ENCODE measurements at regions of chr11 and their contacts with region 1.

Region 1: DNA sequence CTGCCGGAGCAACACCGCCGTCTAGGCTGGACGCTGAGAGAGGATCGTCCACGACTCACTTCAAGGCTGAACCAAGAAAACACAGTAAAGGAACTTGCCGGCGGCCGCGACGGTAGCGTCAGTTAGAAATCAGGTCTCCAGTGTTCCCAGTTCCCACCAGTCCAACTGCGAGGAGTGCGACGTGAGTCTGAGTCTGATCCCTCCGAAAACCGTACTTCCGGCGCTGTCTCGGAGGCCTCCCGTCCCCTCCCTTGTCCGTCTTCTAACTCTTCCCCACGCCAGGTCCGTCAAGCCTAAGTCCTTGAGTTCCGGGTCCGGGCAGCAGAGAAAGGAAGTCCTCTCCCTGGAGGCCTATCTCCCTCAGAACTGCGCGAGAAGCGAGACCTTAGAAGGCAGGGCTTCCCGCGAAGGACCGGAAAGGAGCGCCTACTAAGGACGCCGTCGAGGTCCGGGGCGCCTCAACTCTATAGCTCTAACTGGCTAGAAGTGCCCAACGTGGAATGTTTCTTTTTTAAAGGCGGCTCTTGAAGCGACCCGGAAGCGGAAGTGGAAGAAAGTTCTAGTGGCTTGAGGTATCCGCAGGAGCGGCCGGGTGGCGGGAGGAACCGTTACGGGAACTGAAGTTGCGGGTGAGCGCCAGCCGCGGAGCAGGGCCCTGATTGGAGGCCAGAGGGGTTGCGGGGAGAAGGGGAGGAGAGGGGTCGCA is at the starts of genes BANF1 and EIF1AD:
- DNase-seq: peak; percentile 94
- H3K4me3 ChIP-seq: peak within 1 kb of the TSS; percentile 72 to 86
- H3K27ac ChIP-seq: peak within 1 kb of the TSS; percentile 96 to 97
- H3K4me1 ChIP-seq: peaks cover 9% of the 10 kb centered on the region
- H3K27me3 ChIP-seq: no peaks in the 10 kb centered on the region
- CTCF ChIP-seq: peak in 1 of 4 experiments; percentile 16
- POLR2A ChIP-seq: peak; percentile 20
- total RNA-seq, gene BANF1: 59.4 to 78.8 TPM
- total RNA-seq, gene EIF1AD: 33.6 to 37.3 TPM

Region 2: GRCh38 chr11:65859200-65859811 is 142.8 kb before region 1 on chr11:
- intact Hi-C with region 1: loop called (anchors 2 kb)
- DNase-seq: peak; percentile 99
- H3K4me3 ChIP-seq: peak overlapping the region; percentile 99
- H3K27ac ChIP-seq: peak overlapping the region; percentile 94 to 96
- H3K4me1 ChIP-seq: peaks cover 12% of the 10 kb centered on the region
- H3K27me3 ChIP-seq: no peaks in the 10 kb centered on the region
- CTCF ChIP-seq: peak in 1 of 4 experiments; percentile 32
- POLR2A ChIP-seq: peak; percentile 87

Region 3: DNA sequence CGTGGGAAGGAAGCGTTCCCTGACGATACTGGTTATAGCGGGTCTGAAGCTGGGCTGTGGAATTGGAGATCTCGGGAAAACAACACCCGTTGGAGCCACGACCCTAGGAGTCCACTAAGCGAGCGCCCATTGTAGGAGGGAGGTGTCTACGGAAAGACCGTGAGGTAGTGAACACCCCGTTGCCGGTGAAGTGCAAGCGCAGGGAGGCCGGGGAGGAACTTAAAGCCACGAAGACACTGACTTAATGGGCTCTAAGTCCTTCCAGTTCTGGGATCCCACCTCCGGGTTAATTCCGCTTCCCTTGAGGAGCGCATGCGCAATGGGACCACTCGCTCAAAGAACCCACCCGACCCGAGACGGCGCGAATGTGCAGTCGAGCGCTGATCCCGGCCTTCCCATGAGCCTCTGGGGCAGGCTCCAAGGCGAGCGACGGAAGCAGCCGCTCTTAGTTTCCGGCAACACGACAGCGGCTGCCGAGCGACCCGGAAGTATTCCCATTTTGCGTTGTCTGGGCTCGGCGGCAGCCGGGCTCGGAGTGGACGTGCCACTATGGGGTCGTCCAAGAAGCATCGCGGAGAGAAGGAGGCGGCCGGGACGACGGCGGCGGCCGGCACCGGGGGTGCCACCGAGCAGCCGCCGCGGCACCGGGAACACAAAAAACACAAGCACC is 40.7 kb before region 1 on chr11 and contains the start of gene SART1:
- intact Hi-C with region 1: loop called (anchors 2 kb)
- DNase-seq: peak; percentile 96
- H3K4me3 ChIP-seq: peak within 1 kb of the TSS; percentile 89 to 100
- H3K27ac ChIP-seq: peak within 1 kb of the TSS; percentile 74 to 81
- H3K4me1 ChIP-seq: peaks cover 12% of the 10 kb centered on the region
- H3K27me3 ChIP-seq: no peaks in the 10 kb centered on the region
- CTCF ChIP-seq: peak in 2 of 4 experiments; percentile 26 to 31
- POLR2A ChIP-seq: peak; percentile 48
- total RNA-seq, gene SART1: 36.7 to 76.6 TPM

Region 4: DNA sequence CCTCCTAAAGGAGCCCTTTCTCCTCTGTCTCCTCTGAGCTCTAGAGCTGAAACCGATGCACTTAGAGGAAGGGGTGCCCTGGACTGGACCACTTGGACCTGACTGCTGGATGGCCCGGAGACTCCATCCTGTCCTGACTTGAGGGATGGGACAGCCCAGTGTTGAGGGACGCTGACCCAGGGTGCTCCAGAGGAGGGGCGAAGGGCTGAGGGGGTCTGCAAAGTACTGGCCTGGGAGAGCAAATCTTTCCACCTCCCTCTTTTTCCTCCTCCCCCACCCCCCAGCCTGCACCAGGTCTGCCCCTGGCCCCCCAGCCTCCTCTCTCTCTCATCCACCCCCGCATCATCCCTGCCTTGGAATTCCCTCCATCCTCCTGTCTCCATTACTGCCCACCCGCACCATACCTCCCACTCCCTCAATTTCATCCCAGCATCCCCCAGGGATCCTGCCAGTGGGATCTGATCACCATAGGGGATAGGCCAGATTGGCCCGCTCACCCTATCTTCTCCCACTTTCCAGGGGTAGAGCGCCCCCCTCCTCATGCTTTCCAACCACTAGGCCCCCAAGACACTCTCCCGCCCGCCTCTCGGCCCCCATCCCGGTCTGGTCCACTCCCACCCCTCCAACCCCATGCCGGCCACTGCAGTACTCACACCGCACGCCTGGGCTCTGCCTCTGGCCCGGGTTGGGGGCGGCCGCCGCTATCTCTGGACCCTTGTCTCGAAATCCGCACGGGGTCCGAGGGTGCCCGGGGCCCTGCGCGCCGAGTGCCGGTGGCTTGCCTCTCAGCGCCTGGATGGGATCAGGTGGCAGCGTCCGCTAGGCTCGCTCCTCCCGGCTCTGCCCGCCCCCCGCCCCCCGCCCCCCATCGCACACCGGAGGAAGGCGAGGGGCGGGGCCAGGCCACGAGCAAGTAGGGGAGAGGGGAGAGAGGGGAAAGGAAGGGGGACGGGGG is 46.5 kb after region 1 on chr11 and contains the start of gene GAL3ST3:
- intact Hi-C with region 1: loop called (anchors 2 kb)
- DNase-seq: no peak
- H3K4me3 ChIP-seq: no peak within 1 kb of the TSS
- H3K27ac ChIP-seq: no peak within 1 kb of the TSS
- H3K4me1 ChIP-seq: peaks cover 7% of the 10 kb centered on the region
- H3K27me3 ChIP-seq: no peaks in the 10 kb centered on the region
- CTCF ChIP-seq: no peak
- POLR2A ChIP-seq: no peak
- total RNA-seq, gene GAL3ST3: 2.3 to 4.3 TPM

Region 5: DNA sequence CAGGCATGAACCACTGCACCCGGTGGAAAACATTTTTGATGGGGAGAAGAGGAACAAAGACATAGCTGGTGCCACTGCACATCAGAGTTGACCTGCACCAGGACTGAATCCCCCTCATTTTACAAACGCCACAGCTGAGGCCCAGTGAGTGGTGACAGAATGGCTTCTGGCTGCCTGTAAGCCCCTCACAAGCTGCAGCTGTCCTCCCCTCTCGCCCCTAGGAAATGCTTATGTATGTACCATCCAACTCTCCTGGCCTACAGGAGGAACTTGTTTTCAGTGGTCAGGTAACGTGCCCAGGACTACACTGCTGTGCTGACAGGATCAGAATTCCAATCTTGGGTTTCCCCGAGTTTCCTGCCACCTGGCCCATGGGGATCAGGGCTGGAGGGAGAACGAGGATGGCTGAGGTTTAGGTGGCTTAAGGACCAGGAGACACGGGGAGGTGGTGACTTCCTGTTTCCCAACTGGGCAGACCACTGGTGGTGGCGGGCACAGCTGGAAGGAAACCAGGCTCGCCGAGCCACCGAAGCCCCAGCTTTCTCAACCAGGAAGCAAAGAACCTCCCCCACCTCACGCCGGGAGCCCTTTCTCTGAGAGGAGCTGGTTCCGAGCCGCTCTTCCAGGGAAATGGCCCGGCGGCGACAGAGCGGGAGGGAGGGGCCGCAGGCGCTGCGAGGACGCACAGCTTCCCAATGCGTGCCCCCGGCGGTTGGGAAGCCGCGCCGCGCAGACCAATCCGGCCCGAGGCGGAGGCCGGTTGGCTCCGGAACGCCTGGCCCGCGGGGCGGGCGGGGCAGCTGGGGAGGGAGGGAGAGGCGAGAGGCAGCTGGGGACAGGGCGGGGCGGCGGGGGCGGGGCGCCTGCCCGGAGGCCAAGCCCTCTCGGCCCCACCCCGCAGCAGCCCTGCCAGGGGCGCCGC is 853.7 kb after region 1 on chr11:
- intact Hi-C with region 1: no loop called
- DNase-seq: peak; percentile 84
- H3K4me3 ChIP-seq: peak overlapping the region; percentile 37 to 57
- H3K27ac ChIP-seq: peak overlapping the region; percentile 72 to 80
- H3K4me1 ChIP-seq: no peaks in the 10 kb centered on the region
- H3K27me3 ChIP-seq: no peaks in the 10 kb centered on the region
- CTCF ChIP-seq: peak in 1 of 4 experiments; percentile 13
- POLR2A ChIP-seq: peak; percentile 52

Measured in prostate gland (tissue), 2 donors.